Activated T-helper 1 cell treated with anti-CD3 and anti-CD28 coated beads, Interleukin-12 subunit alpha, Interleukin-12 subunit beta, Interleukin-2, Interleukin-4 antibody, amounts not matched to agents 30 ng/mL and 10 ng/mL and 1 ng/mL, durations not matched to agents 14 hours and 24 hours and 36 hours (primary cell): ENCODE measurements at regions of chr4 and their contacts with region 1.

Region 1: GRCh38 chr4:76546282-76547171 is 111.5 kb downstream of the SHROOM3 start:
- DNase-seq: no peak
- H3K4me3 Mint-ChIP-seq: no peak overlapping the region
- H3K27ac Mint-ChIP-seq: no peak overlapping the region
- H3K4me1 Mint-ChIP-seq: peaks cover 22% of the 10 kb centered on the region
- H3K27me3 Mint-ChIP-seq: peaks cover 4% of the 10 kb centered on the region

Region 2: DNA sequence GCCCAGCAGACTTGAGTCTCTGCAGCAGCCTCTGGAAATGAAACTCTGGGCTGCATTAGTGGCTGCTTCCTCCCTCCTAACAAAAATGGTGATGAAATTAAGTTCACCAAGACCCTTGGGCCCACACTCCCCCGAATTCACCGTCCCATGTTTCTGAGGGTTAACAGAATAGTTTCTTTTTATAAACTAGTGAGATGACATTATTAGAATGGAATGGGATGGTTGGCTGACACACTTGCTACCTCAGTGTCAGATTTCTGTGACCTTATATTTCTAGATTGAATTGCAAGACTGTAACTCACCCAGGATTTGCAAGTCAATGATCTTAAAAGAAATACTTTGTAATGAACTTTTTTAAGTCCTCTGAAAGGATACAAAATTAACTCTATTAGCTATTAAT is 15.6 kb after region 1 on chr4:
- intact Hi-C with region 1: loop called (anchors 2 kb)
- DNase-seq: no peak
- H3K4me3 Mint-ChIP-seq: no peak overlapping the region
- H3K27ac Mint-ChIP-seq: no peak overlapping the region
- H3K4me1 Mint-ChIP-seq: peaks cover 12% of the 10 kb centered on the region
- H3K27me3 Mint-ChIP-seq: peaks cover 7% of the 10 kb centered on the region

Region 3: GRCh38 chr4:76572224-76572623 is 25.7 kb after region 1 on chr4:
- intact Hi-C with region 1: no loop called
- DNase-seq: no peak
- H3K4me3 Mint-ChIP-seq: no peak overlapping the region
- H3K27ac Mint-ChIP-seq: no peak overlapping the region
- H3K4me1 Mint-ChIP-seq: no peaks in the 10 kb centered on the region
- H3K27me3 Mint-ChIP-seq: peaks cover 22% of the 10 kb centered on the region

Region 4: DNA sequence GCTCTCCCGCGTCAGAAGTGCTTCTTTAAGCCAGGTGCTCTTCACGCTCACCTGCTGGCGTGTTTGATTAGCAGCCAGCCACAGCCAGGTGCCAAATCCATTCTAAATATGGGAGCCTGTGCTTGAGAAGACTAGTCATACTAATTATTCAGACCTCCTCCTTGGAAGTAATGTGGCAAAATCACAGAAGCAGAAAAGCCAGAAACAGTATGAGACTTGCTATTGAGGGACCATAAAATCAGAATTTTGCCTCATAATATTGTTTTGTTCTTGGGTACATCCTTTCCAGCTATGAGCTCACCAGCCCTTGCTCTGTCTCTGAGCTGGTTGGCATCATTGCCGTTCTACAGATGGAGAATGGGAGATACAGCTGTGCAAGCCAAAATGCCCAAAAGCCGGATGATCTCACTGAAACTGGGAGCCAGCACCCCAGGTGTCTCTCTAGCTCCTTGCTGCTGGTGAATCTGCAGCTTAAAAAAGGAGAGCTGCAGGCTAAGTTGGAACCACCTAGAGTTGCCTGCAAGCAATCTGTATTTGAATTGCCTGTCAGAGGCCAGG is 93.9 kb after region 1 on chr4:
- intact Hi-C with region 1: no loop called
- DNase-seq: no peak
- H3K4me3 Mint-ChIP-seq: no peak overlapping the region
- H3K27ac Mint-ChIP-seq: no peak overlapping the region
- H3K4me1 Mint-ChIP-seq: no peaks in the 10 kb centered on the region
- H3K27me3 Mint-ChIP-seq: peaks cover 10% of the 10 kb centered on the region

Region 5: DNA sequence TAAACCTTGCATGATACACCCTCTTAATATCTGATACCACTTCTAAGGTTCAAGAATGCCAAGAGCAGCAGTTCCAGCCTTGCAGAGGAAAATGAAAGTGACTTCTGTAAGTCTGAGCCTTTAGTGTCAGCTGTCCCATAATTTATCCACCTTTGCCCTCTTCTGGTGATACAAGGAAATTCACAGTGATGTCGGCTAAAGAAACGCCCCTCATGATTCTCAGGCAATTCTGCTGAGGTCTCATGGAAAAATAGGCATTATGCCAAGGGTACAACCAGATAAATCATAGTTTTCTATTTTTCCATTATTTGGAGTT is 886.8 kb after region 1 on chr4:
- intact Hi-C with region 1: no loop called
- DNase-seq: peak; percentile 4
- H3K4me3 Mint-ChIP-seq: no peak overlapping the region
- H3K27ac Mint-ChIP-seq: no peak overlapping the region
- H3K4me1 Mint-ChIP-seq: peaks cover 8% of the 10 kb centered on the region
- H3K27me3 Mint-ChIP-seq: no peaks in the 10 kb centered on the region